K562 (cell line): ENCODE measurements at regions of chr6 and their contacts with region 1.

Region 1: GRCh38 chr6:33391278-33391921 is at the start of gene KIFC1:
- DNase-seq: peak; percentile 98 to 100 (median 98)
- ATAC-seq: peak; percentile 97
- H3K4me3 ChIP-seq: peak within 1 kb of the TSS; percentile 74
- H3K27ac ChIP-seq: peak within 1 kb of the TSS; percentile 89
- H3K4me1 ChIP-seq: peaks cover 19 to 22% of the 10 kb centered on the region in 2 experiments
- H3K27me3 ChIP-seq: no peaks in the 10 kb centered on the region
- CTCF ChIP-seq: peak; percentile 99 to 100 (median 99)
- EP300 ChIP-seq: peak; percentile 39; the same call in 1 of the 2 replicates
- POLR2A ChIP-seq: 0 out of 2 replicates have a peak, but pooled peaks have one; percentile 85
- RAD21 ChIP-seq: peak; percentile 86 to 89
- polyA plus RNA-seq, gene KIFC1: 1.3 to 2.2 TPM

Region 2: DNA sequence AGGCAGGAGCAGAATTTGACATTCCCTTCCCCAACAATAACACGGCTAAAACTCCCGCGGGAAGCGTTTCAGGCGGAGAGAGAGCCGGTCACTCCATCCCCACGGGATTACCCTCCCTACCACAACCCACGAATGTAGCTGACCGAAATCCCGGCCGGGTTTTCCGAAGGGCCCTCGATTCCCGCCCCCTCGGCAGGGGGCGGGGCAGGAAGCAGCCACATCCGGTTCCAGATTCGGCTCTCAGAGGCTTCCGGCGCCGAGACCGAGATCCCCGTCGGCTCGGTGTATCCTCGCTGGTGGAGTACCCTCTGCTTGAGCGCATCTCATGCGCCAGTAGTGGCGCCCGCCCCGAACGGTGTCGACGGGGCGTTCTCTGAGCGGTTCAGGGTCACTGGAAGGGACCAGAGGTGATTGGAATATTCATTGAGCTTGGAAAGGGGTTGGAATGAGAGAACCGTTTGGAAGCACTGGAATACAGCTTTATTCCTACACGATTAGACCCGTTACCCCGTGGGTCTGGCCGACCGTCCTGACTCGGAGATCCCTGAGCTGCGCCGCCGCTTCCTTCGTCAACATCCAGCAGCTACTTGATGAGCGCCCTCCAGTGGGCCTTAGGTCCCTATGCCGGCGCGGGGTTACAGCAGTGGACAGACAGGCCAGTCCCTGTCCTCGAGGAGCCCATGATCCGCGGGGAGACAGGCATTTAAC is 92.0 kb before region 1 on chr6:
- CTCF ChIA-PET with region 1: no interaction called
- POLR2A ChIA-PET with region 1: interaction called, 3 read pairs
- in situ Hi-C with region 1: no loop called
- intact Hi-C with region 1: loop called (anchors 5 kb)
- DNase-seq: peak; percentile 90 to 98 (median 92)
- ATAC-seq: peak; percentile 84
- H3K4me3 ChIP-seq: peak overlapping the region; percentile 64
- H3K27ac ChIP-seq: peak overlapping the region; percentile 94
- H3K4me1 ChIP-seq: peaks cover 11 to 44% of the 10 kb centered on the region in 2 experiments
- H3K27me3 ChIP-seq: no peaks in the 10 kb centered on the region
- CTCF ChIP-seq: peak; percentile 89 to 97 (median 97)
- EP300 ChIP-seq: peak; percentile 46
- POLR2A ChIP-seq: peak; percentile 99
- RAD21 ChIP-seq: peak; percentile 68 to 69

Region 3: DNA sequence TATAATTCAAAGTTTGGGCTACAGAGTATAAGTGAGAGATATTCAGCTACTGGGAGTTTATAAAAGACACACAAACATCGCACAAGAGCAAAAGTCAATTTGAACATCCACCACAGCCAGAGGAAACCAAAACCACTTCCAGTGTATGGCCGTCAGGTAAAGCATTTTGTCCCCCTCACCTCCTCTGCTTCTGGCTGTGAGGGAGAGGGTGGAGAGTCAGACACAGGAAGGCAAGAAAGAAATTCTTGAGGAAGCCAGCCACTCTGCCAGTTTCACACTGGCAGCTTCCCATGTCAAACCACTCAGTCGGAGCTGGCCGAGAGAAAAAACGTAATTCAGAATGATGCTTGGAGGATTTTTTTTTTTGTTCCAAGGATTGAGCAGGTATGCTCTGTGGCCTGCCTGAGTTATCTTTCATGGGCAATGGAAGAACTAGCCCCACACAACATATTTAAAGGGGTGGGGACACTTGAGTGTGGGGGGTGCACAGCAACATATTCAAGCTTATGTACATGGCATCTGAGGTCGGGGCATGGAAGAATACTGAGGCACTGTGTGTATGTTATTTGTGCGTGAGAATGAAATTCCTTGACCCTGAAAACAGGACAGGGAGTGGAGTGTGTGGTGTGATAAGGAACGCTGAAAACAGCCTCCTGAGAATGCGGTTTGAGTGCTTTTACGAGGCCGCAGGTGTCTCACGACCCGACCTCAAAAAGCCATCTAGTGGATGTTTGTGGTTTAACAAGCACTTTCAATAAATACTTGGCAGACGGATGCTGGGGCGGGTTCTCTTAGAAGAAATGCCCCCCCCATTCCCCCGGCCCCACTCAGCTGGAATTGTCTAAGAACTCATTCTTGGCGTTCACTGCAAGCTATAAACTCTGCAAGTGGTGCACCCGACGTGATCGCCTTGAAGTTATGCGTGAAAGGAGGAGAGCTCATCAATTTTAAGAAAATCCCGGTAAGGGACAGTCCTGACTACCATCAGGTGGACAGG is 46.4 kb before region 1 on chr6:
- CTCF ChIA-PET with region 1: no interaction called
- POLR2A ChIA-PET with region 1: no interaction called
- in situ Hi-C with region 1: no loop called
- intact Hi-C with region 1: loop called (anchors 5 kb)
- DNase-seq: peak; percentile 84 to 93 (median 84)
- ATAC-seq: peak; percentile 85
- H3K4me3 ChIP-seq: no peak overlapping the region
- H3K27ac ChIP-seq: peak overlapping the region; percentile 1; the same call in 1 of the 3 replicates
- H3K4me1 ChIP-seq: peaks cover 5 to 12% of the 10 kb centered on the region in 2 experiments; a peak in 3 of 5 replicates
- H3K27me3 ChIP-seq: no peaks in the 10 kb centered on the region
- CTCF ChIP-seq: peak; percentile 76 to 81 (median 80)
- EP300 ChIP-seq: peak; percentile 61
- POLR2A ChIP-seq: no peak
- RAD21 ChIP-seq: peak; percentile 72 to 83

Region 4: GRCh38 chr6:33410050-33410710 is 18.8 kb after region 1 on chr6:
- CTCF ChIA-PET with region 1: interaction called, 3 read pairs
- POLR2A ChIA-PET with region 1: interaction called, 7 read pairs
- in situ Hi-C with region 1: no loop called
- intact Hi-C with region 1: loop called (anchors 1 kb)
- DNase-seq: peak; percentile 97 to 99 (median 98)
- ATAC-seq: peak; percentile 96
- H3K4me3 ChIP-seq: peak overlapping the region; percentile 95
- H3K27ac ChIP-seq: peak overlapping the region; percentile 93
- H3K4me1 ChIP-seq: peaks cover 11 to 27% of the 10 kb centered on the region in 2 experiments; a peak in 4 of 5 replicates
- H3K27me3 ChIP-seq: no peaks in the 10 kb centered on the region
- CTCF ChIP-seq: 0 out of 6 replicates have a peak, but pooled peaks of 1 of the 3 experiments have one; percentile 1
- EP300 ChIP-seq: peak; percentile 43
- POLR2A ChIP-seq: peak; percentile 90
- RAD21 ChIP-seq: 0 out of 4 replicates have a peak, but pooled peaks of 1 of the 2 experiments have one; percentile 8

Region 5: GRCh38 chr6:33417903-33418689 is 26.7 kb after region 1 on chr6 and contains the start of gene CUTA:
- CTCF ChIA-PET with region 1: no interaction called
- POLR2A ChIA-PET with region 1: interaction called, 3 read pairs
- in situ Hi-C with region 1: no loop called
- intact Hi-C with region 1: loop called (anchors 2 kb)
- DNase-seq: peak; percentile 95 to 100 (median 97)
- ATAC-seq: peak; percentile 93
- H3K4me3 ChIP-seq: peak within 1 kb of the TSS; percentile 84
- H3K27ac ChIP-seq: peak within 1 kb of the TSS; percentile 95
- H3K4me1 ChIP-seq: peaks cover 40 to 43% of the 10 kb centered on the region in 2 experiments
- H3K27me3 ChIP-seq: no peaks in the 10 kb centered on the region
- CTCF ChIP-seq: peak; percentile 35 to 80 (median 52); a peak in 4 of 6 replicates
- EP300 ChIP-seq: peak; percentile 33; the same call in 1 of the 2 replicates
- POLR2A ChIP-seq: peak; percentile 87
- RAD21 ChIP-seq: 0 out of 4 replicates have a peak, but pooled peaks of 1 of the 2 experiments have one; percentile 12
- polyA plus RNA-seq, gene CUTA: 653 to 682 TPM

Region 6: GRCh38 chr6:33492093-33492492 is 100.7 kb after region 1 on chr6:
- CTCF ChIA-PET with region 1: no interaction called
- POLR2A ChIA-PET with region 1: no interaction called
- in situ Hi-C with region 1: no loop called
- intact Hi-C with region 1: loop called (anchors 1 kb)
- DNase-seq: peak in 2 of 4 experiments; percentile 25 to 39
- ATAC-seq: peak; percentile 65
- H3K4me3 ChIP-seq: no peak overlapping the region
- H3K27ac ChIP-seq: no peak overlapping the region
- H3K4me1 ChIP-seq: peaks cover 7 to 18% of the 10 kb centered on the region in 2 experiments; a peak in 4 of 5 replicates
- H3K27me3 ChIP-seq: no peaks in the 10 kb centered on the region
- CTCF ChIP-seq: peak; percentile 33 to 47 (median 44); a peak in 3 of 6 replicates
- EP300 ChIP-seq: no peak
- POLR2A ChIP-seq: no peak
- RAD21 ChIP-seq: peak in 1 of 2 experiments; percentile 66; a peak in 2 of 4 replicates